ENCODE measurements at regions of chr7 and their contacts with region 1.

Region 1: GRCh38 chr7:142323706-142324105 is 65.8 kb upstream of the PRSS58 start:
- DNase-seq: peak in 2 of 5 donors; percentile 31 to 37
- H3K4me3 ChIP-seq: no peak overlapping the region
- H3K4me3 Mint-ChIP-seq: peak overlapping the region in 4 of 8 donors; percentile 6 to 69 (median 18)
- H3K27ac ChIP-seq: no peak overlapping the region
- H3K27ac Mint-ChIP-seq: peak overlapping the region; percentile 56 to 91 (median 71)
- H3K4me1 ChIP-seq: peaks cover 25% of the 10 kb centered on the region
- H3K4me1 Mint-ChIP-seq: peaks cover 13 to 34% (median 19%) of the 10 kb centered on the region in 4 donors
- H3K27me3 ChIP-seq: no peaks in the 10 kb centered on the region
- H3K27me3 Mint-ChIP-seq: peaks cover 0 to 3% of the 10 kb centered on the region in 2 donors

Region 2: DNA sequence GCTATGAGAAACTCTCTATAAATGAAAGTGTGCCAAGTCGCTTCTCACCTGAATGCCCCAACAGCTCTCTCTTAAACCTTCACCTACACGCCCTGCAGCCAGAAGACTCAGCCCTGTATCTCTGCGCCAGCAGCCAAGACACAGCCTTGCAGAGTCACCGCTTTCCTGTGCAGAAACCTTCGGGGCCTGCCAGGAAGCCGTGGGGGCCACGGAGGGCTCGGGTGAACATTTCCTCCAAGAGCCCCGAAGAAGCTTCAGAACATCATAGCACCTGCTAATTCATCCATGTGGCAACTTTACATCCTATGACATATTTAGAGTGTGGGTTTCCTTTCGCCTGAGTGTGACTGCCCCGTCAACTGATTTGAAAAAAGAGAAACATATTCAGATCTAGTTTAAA is 10.2 kb before region 1 on chr7:
- CTCF ChIA-PET with region 1: interaction called, 10 read pairs
- POLR2A ChIA-PET with region 1: interaction called, 4 read pairs
- intact Hi-C with region 1: no loop called
- DNase-seq: peak in 4 of 5 donors; percentile 30 to 61 (median 38)
- H3K4me3 ChIP-seq: no peak overlapping the region
- H3K4me3 Mint-ChIP-seq: peak overlapping the region; percentile 17 to 67 (median 58)
- H3K27ac ChIP-seq: no peak overlapping the region
- H3K27ac Mint-ChIP-seq: peak overlapping the region in 6 of 7 donors; percentile 46 to 88 (median 67)
- H3K4me1 ChIP-seq: peaks cover 12% of the 10 kb centered on the region
- H3K4me1 Mint-ChIP-seq: peaks cover 6 to 27% (median 9%) of the 10 kb centered on the region in 4 donors
- H3K27me3 ChIP-seq: no peaks in the 10 kb centered on the region
- H3K27me3 Mint-ChIP-seq: peaks cover 9 to 14% of the 10 kb centered on the region in 2 donors

Region 3: DNA sequence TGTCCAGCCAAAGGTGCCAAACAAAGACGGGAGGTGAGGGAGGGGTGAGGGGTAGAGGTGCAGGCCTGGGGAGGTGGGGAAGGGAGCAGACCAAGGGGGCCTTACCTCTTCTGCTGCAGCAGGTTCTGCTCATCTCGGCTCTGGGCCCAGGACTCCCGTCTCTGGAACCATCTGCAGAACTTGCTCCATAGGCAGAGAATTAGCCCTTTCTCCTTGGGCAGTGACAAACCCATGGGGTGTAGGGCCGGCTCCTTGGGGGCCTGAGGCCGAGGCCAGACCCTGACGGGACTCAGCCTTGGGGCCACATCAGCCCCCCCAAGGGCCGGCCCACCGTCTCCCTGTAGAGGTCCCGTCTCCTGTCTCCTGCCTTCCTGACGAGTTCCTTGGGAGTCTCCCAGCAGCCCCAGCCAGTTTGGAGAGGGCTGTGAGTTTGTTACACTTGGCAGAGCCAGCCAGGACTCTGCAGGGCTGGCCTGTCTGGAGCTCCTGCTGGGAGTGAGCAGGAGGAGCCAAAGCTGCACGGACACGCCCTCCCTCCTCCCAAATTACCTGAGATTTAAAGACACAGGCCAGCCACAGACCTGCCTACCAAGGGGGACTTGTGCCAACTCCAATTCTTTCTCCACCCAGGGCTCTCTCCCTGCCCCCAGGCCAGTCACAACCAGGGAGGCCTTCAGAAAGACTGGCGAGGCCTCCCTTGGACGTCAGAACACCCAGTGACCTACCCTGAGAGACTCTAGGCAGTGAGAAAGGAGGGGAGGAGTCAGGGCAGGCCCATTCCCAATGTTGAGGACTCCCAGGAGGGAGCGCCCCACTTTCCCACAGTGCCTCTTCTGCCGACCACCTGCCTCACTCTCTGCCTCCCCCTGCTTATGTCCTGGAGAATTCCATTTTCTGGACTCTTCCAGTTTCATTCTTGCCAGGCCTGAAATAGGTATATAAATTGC is 561.9 kb after region 1 on chr7 and contains the start of gene TRPV6:
- CTCF ChIA-PET with region 1: no interaction called
- POLR2A ChIA-PET with region 1: no interaction called
- intact Hi-C with region 1: no loop called
- DNase-seq: no peak
- H3K4me3 ChIP-seq: no peak within 1 kb of the TSS
- H3K4me3 Mint-ChIP-seq: no peak within 1 kb of the TSS
- H3K27ac ChIP-seq: no peak within 1 kb of the TSS
- H3K27ac Mint-ChIP-seq: no peak within 1 kb of the TSS
- H3K4me1 ChIP-seq: no peaks in the 10 kb centered on the region
- H3K4me1 Mint-ChIP-seq: peaks cover 0 to 4% (median 0%) of the 10 kb centered on the region in 4 donors
- H3K27me3 ChIP-seq: no peaks in the 10 kb centered on the region
- H3K27me3 Mint-ChIP-seq: peaks cover 8 to 11% of the 10 kb centered on the region in 2 donors
- total RNA-seq, gene TRPV6: not detected

Measured in CD4-positive, alpha-beta memory T cell (primary cell).